ENCODE measurements at regions of chr1 and their contacts with region 1.

Region 1: DNA sequence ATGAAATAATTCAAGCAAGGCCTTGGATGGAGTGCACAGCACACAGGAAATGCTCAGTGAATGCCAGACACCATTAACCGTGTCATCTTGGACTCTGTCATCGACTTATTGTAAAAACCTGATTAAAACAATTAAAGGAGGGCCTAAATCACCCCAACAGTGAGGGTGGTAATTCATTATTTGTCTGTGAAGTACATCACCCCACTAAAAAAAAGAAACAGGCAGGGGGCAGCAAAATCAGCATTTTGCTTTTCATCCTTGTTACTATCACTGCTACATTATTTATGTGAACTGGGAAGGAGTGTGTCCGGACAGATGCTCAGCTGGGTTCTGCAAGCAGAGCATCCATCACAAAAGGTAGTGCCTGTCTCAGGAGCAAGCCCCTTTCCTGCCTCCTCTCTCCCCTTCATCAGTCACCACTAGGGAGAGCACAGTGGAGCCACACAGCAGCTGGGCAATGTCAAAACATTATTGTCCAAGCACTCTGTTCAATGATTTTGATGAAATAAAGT is 98.5 kb downstream of the RERE start:
- DNase-seq: no peak
- ATAC-seq: no peak
- H3K4me3 Mint-ChIP-seq: no peak overlapping the region
- H3K27ac Mint-ChIP-seq: no peak overlapping the region
- H3K4me1 Mint-ChIP-seq: peaks cover 13% of the 10 kb centered on the region
- H3K27me3 Mint-ChIP-seq: no peaks in the 10 kb centered on the region

Region 2: GRCh38 chr1:8702850-8703810 is 15.8 kb before region 1 on chr1:
- CTCF ChIA-PET with region 1: interaction called, 15 read pairs
- DNase-seq: peak; percentile 76
- ATAC-seq: peak; percentile 68
- H3K4me3 Mint-ChIP-seq: peak overlapping the region; percentile 70
- H3K27ac Mint-ChIP-seq: peak overlapping the region; percentile 67
- H3K4me1 Mint-ChIP-seq: peaks cover 35% of the 10 kb centered on the region
- H3K27me3 Mint-ChIP-seq: peaks cover 23% of the 10 kb centered on the region

Region 3: DNA sequence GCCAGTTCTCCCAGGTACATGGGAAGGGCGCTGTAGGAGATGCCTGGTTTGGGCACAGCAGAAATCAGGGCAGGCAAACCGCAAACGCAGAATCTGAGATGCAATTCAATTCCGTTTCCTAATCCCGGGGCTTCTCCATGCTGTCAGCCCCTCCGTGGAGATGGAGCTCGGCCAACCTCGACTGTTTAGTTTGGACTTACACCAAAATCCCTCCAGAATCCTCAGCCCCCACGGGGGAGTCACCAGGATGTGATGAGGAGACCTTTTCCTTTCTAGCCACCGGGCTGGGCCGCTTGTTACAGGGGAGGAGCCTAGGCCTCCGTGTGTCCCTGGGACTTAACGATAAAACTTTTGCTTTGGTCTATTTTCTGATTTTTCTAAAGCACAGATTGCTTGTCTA is 299.4 kb after region 1 on chr1:
- CTCF ChIA-PET with region 1: no interaction called
- DNase-seq: no peak
- ATAC-seq: no peak
- H3K4me3 Mint-ChIP-seq: no peak overlapping the region
- H3K27ac Mint-ChIP-seq: no peak overlapping the region
- H3K4me1 Mint-ChIP-seq: no peaks in the 10 kb centered on the region
- H3K27me3 Mint-ChIP-seq: peaks cover 17% of the 10 kb centered on the region

Measured in activated CD8-positive, alpha-beta memory T cell treated with anti-CD3 and anti-CD28 coated beads, Interleukin-2, amount 10 ng/mL, durations not matched to agents 7 days and 5 days (primary cell).